Dendritic cell treated with granulocyte-macrophage colony-stimulating factor and Interleukin-4, amounts not matched to agents 40 ng/mL and 50 ng/mL, for 4 days (primary cell): ENCODE measurements at regions of chr9 and their contacts with region 1.

Region 1: DNA sequence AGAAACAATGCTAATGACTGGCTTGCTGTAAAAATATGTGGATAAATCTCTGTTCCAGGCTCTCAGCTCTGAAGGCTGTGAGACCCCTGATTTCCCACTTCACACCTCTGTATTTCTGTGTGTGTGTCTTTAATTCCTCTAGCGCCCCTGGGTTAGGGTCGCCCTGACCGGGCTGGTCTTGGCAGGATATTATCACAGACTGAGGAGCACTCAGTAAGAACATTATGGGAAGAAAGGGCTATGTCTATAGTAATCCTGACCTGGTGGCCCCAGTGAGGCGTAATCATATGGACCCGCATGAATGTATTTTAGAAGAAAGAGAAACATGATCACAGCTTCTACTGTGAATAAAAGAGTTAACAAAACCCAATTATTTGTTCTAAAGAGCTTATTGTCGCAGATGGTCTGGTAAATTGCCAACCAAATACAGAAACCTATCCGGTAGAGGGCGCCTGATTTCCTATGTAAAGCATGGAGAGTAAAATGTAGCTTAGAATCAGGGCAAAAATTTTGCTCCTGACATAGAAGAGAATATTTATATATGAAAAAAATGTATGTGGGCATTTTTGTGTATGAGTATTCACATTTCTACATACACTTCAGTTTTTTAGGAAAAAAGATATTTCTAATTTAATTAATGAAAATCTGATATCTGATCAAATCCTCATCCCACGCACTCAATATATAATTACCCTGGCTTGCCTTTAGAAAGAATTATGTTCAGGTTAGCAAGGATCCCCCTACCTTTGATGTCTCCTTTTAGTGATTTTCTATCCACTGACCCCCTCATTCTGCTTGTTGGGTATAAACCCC is 5.8 kb upstream of the IFNA1 start:
- H3K4me3 Mint-ChIP-seq: no peak overlapping the region
- H3K27ac Mint-ChIP-seq: no peak overlapping the region
- H3K4me1 Mint-ChIP-seq: peaks cover 16% of the 10 kb centered on the region
- H3K27me3 Mint-ChIP-seq: peaks cover 55% of the 10 kb centered on the region

Region 2: GRCh38 chr9:21381448-21382339 is 52.7 kb before region 1 on chr9:
- intact Hi-C with region 1: loop called (anchors 5 kb)
- H3K4me3 Mint-ChIP-seq: peak overlapping the region; percentile 48
- H3K27ac Mint-ChIP-seq: no peak overlapping the region
- H3K4me1 Mint-ChIP-seq: peaks cover 30% of the 10 kb centered on the region
- H3K27me3 Mint-ChIP-seq: peaks cover 60% of the 10 kb centered on the region